ENCODE measurements at regions of chr14 and their contacts with region 1.

Region 1: GRCh38 chr14:44897045-44897844 is 64.5 kb downstream of the KLHL28 start:
- DNase-seq: peak; percentile 93
- H3K4me3 ChIP-seq: peak overlapping the region; percentile 78 to 92 (median 86)
- H3K27ac ChIP-seq: peak overlapping the region; percentile 84
- H3K4me1 ChIP-seq: peaks cover 5% of the 10 kb centered on the region
- H3K27me3 ChIP-seq: no peaks in the 10 kb centered on the region
- CTCF ChIP-seq: no peak

Region 2: DNA sequence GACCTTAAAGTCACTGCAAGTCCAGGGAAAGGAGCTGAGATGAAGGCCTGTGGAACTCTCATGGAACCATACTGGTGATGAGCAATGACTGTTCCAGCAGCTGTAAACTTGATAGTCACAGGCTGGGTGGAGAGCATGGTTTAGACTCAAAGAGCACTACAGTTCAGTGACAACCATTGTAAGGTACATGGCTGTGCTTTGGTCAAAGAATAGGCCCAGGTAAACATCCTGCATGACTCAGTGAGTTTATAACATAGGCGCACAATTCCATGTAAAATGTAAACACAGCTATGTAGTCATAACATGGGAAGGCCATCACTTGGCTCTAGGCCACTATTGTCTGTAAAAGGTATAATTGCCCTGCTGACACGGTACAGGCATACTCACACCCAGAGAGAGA is 270.8 kb before region 1 on chr14:
- CTCF ChIA-PET with region 1: no interaction called
- dilution Hi-C with region 1: no loop called
- in situ Hi-C with region 1: no loop called
- intact Hi-C with region 1: no loop called
- DNase-seq: no peak
- H3K4me3 ChIP-seq: no peak overlapping the region
- H3K27ac ChIP-seq: no peak overlapping the region
- H3K4me1 ChIP-seq: no peaks in the 10 kb centered on the region
- H3K27me3 ChIP-seq: no peaks in the 10 kb centered on the region
- CTCF ChIP-seq: no peak

Region 3: DNA sequence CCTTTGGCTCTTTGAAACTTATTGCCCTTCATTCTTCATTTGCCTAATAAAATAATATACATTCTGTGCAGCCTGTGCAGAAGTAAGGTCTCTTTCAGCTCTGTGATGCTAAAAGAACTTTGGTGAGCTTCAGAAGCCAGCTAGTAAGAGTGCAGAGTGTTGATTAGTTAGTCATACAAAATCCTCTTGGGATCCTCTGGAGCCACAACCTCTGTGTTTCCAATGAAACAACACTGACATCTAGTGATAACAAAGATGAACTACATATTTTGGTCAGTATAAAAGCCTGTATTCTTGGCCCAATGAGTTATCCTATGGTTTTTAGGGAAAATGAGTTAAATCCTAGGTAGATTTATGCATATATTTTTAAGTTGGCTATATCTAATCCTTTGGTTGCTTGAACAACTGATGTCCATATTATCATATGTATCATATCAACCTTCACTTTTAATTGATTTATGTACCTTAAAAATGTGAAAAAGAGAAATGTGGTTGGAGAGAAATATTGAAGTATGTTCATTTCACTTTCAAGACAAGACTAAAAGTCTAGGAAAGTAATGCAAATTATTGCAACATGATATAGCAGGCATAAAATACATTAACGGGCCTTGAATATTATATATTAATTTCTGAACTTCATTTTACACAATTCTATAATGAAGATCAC is 93.9 kb before region 1 on chr14:
- CTCF ChIA-PET with region 1: no interaction called
- dilution Hi-C with region 1: no loop called
- in situ Hi-C with region 1: no loop called
- intact Hi-C with region 1: no loop called
- DNase-seq: peak; percentile 46
- H3K4me3 ChIP-seq: no peak overlapping the region
- H3K27ac ChIP-seq: no peak overlapping the region
- H3K4me1 ChIP-seq: no peaks in the 10 kb centered on the region
- H3K27me3 ChIP-seq: no peaks in the 10 kb centered on the region
- CTCF ChIP-seq: peak; percentile 45 to 71

Region 4: DNA sequence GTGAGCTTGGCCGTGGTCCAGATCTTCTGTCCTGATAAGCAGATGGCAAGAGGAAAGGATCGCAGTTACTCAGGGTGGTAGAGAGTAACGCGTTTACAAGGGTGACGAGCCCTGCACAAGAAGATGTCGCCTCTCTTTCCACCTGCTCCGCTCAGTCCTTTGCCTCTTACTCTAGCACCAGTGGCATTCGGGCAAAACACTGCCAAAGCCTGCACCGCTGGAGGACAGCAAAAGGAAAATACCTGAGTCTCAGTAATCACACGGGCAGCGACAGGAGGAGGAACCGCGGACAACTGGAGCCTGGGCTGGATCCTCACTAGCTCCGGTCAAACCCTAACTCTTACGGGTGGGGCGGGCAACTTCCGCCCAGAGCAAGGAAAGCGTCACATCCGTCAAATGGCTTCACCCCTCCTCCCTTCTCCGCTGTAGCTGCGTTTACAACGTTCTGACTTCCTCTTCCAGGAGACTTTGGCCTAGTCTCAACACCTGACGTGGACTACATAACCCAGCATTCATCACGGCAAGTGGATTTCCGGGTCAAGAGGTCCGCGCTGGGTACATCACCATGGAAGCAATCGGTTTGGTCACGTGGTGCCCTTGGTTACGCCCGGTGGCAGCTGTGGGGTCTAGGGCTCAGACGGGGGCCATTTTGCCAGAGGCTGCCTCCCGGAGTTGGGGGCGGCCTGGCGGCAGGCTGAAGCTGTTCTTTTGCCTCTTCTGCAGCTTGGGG is 64.5 kb after region 1 on chr14 and contains the starts of genes KLHL28 and TOGARAM1:
- CTCF ChIA-PET with region 1: no interaction called
- dilution Hi-C with region 1: no loop called
- in situ Hi-C with region 1: no loop called
- intact Hi-C with region 1: loop called (anchors 5 kb)
- DNase-seq: peak; percentile 100
- H3K4me3 ChIP-seq: peak within 1 kb of the TSS; percentile 86 to 98 (median 95)
- H3K27ac ChIP-seq: peak within 1 kb of the TSS; percentile 85
- H3K4me1 ChIP-seq: peaks cover 6% of the 10 kb centered on the region
- H3K27me3 ChIP-seq: no peaks in the 10 kb centered on the region
- CTCF ChIP-seq: no peak
- total RNA-seq, gene KLHL28: 10.2 to 20.3 TPM
- total RNA-seq, gene TOGARAM1: 10.4 to 18.7 TPM

Region 5: DNA sequence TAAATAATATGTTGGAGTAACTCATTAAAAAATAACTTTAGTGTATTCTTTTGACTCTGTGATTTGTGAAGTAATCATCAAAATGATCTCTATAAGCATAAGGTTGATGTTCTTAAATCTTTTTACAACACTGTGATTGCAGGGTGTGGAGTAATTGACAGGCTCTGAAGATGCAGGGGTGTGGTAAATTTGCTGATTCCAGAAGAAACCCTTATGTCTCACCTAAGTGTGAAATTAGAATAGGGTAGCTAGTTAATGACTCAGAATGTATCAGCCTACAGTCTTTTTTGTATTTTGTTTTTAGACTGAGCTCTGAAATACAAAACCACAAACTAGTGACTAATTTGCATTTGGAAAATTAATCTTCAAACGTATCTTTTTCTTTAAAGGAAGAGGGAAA is 192.6 kb after region 1 on chr14:
- CTCF ChIA-PET with region 1: no interaction called
- dilution Hi-C with region 1: no loop called
- in situ Hi-C with region 1: no loop called
- intact Hi-C with region 1: loop called (anchors 5 kb)
- DNase-seq: peak; percentile 76
- H3K4me3 ChIP-seq: peak overlapping the region in 1 of 3 experiments; percentile 10
- H3K27ac ChIP-seq: no peak overlapping the region
- H3K4me1 ChIP-seq: peaks cover 38% of the 10 kb centered on the region
- H3K27me3 ChIP-seq: no peaks in the 10 kb centered on the region
- CTCF ChIP-seq: no peak

Region 6: GRCh38 chr14:45253068-45253753 is 356.0 kb after region 1 on chr14 and contains the start of gene MIS18BP1:
- CTCF ChIA-PET with region 1: no interaction called
- dilution Hi-C with region 1: no loop called
- in situ Hi-C with region 1: loop called in 1 of 2 experiments (anchors 10 kb)
- intact Hi-C with region 1: no loop called
- DNase-seq: peak; percentile 97
- H3K4me3 ChIP-seq: peak within 1 kb of the TSS; percentile 69 to 98 (median 94)
- H3K27ac ChIP-seq: peak within 1 kb of the TSS; percentile 81
- H3K4me1 ChIP-seq: peaks cover 18% of the 10 kb centered on the region
- H3K27me3 ChIP-seq: no peaks in the 10 kb centered on the region
- CTCF ChIP-seq: peak; percentile 48 to 68
- total RNA-seq, gene MIS18BP1: 22.5 to 25.8 TPM

Region 7: DNA sequence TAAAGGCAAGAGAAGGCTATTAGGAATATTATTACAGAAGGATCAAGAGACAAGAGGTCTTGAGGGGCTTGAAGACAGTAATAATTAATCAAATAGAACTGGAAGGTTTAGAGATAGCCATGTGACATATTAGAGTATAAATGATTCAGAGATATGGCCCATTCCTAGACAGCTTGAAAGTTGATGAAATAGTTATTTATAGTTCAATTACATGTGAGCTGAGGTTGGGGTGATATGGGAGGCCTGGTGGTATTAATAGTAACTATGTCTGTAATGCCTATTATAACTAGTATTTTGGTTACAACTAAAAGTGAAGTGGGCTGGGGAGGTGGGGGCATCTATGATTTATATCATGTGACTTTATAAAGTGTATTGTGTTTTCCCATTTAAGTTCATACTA is 369.8 kb after region 1 on chr14:
- CTCF ChIA-PET with region 1: no interaction called
- dilution Hi-C with region 1: no loop called
- in situ Hi-C with region 1: loop called in 1 of 2 experiments (anchors 10 kb)
- intact Hi-C with region 1: no loop called
- DNase-seq: no peak
- H3K4me3 ChIP-seq: no peak overlapping the region
- H3K27ac ChIP-seq: no peak overlapping the region
- H3K4me1 ChIP-seq: no peaks in the 10 kb centered on the region
- H3K27me3 ChIP-seq: no peaks in the 10 kb centered on the region
- CTCF ChIP-seq: no peak

Measured in mammary epithelial cell (primary cell).